ENCODE measurements at regions of chr5 and their contacts with region 1.

Region 1: GRCh38 chr5:35902046-35902676 is 36.3 kb downstream of the CAPSL start:
- DNase-seq: peak; percentile 42
- ATAC-seq: peak; percentile 60
- H3K4me3 Mint-ChIP-seq: peak overlapping the region; percentile 5
- H3K27ac Mint-ChIP-seq: peak overlapping the region; percentile 81
- H3K4me1 Mint-ChIP-seq: peaks cover 85% of the 10 kb centered on the region
- H3K27me3 Mint-ChIP-seq: no peaks in the 10 kb centered on the region

Region 2: DNA sequence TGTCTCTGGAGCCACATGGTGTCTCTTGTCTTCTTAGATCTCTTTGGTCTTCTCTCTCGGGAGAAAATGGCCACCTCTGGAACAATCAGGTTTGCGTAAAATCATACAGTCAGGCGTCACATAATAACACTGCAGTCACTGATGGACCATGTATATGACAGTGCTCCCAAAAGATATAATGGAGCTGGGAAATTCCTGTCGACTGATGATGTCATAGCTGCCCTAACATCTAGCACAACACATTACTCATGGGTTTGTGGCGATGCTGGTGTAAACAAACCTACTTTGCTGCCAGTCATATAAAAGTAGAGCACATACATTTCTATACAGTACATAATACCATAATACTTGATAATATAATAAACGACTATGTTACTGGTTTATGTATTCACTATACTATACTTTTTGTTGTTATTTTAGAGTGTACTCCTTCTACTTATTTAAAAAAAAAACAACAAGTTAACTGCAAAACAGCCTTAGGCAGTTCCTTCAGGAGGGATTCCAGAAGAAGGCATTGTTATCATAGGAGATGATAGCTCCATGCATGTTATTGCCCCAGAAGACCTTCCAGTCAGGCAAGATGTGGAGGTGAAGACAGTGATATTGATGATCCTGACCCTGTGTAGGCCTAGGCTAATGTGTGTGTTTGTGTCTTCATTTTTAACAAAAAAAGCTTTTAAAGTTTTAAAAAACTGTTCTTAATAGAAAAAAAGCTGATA is 1276.0 kb before region 1 on chr5:
- CTCF ChIA-PET with region 1: no interaction called
- POLR2A ChIA-PET with region 1: no interaction called
- intact Hi-C with region 1: no loop called
- DNase-seq: no peak
- ATAC-seq: peak; percentile 36
- H3K4me3 Mint-ChIP-seq: no peak overlapping the region
- H3K27ac Mint-ChIP-seq: no peak overlapping the region
- H3K4me1 Mint-ChIP-seq: peaks cover 9% of the 10 kb centered on the region
- H3K27me3 Mint-ChIP-seq: peaks cover 6% of the 10 kb centered on the region

Region 3: DNA sequence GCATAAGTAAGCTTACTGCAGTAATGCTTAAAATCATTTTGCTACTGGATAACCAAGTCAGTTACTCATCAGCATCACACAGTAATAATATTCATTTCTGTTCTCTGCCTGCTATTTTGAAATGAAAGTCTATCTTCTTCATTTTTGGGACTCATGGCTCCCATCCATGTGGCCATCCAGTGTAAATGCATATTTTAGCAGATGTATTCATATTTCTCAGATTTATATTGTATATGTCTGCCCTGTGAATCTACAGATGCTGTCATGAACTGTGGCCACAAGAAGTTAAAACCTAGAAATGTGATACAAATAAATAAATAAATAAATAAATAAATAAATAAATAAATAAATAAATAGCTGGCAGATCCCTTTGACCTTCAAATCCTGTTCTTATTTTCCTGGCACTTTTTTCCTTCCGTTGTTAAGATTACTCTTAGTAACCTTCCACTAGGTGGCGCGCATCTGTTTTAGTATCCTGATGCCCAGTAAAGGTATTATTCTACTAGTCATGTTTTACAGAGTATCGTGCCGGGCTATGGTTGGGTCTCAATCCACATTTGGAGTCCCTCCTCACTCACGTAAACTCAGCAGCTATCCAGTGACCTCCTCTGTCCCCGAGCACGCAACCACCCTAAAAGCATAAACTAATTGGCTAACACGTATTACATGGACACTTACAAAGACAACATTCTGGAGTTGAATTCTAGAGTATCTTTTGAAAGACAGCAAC is 124.6 kb before region 1 on chr5:
- CTCF ChIA-PET with region 1: interaction called, 11 read pairs
- POLR2A ChIA-PET with region 1: no interaction called
- intact Hi-C with region 1: no loop called
- DNase-seq: peak; percentile 86
- ATAC-seq: peak; percentile 33
- H3K4me3 Mint-ChIP-seq: peak overlapping the region; percentile 17
- H3K27ac Mint-ChIP-seq: peak overlapping the region; percentile 79
- H3K4me1 Mint-ChIP-seq: peaks cover 84% of the 10 kb centered on the region
- H3K27me3 Mint-ChIP-seq: no peaks in the 10 kb centered on the region

Region 4: GRCh38 chr5:35794684-35795375 is 107.3 kb before region 1 on chr5:
- CTCF ChIA-PET with region 1: interaction called, 3 read pairs
- POLR2A ChIA-PET with region 1: no interaction called
- intact Hi-C with region 1: loop called in 1 of 2 experiments (anchors 1 kb)
- DNase-seq: peak; percentile 45
- ATAC-seq: peak; percentile 40
- H3K4me3 Mint-ChIP-seq: peak overlapping the region; percentile 25
- H3K27ac Mint-ChIP-seq: peak overlapping the region; percentile 91
- H3K4me1 Mint-ChIP-seq: peaks cover 90% of the 10 kb centered on the region
- H3K27me3 Mint-ChIP-seq: no peaks in the 10 kb centered on the region

Region 5: DNA sequence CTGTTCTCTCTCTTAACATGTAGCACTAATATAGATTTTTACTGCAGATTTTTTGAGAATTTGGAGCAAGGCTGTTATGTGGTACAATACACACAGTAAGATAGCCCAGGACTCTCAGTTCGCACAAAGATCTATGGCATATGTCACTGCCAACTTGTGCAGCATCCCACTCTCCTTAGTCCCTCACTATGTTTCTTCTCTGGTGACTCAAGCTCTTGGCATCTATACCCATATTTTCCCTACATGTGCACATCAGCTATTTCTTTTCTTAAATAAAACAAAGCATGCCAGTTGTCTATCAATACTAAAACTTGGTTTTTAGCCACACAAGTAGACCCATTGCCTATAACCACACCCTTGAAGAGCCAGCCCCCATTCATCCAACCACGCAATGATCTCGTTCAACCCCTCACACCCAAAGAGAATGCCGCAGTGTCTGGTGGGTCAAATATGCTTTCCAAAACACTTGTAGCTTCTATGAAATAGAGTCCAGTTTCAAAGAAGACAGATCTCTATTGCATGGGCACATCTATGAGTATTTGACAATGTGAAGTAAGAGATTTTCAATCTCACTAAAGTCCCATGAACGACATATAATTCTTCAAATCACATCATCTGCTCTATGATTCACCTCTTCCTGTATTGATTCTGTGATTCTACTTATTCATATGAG is 63.7 kb before region 1 on chr5:
- CTCF ChIA-PET with region 1: no interaction called
- POLR2A ChIA-PET with region 1: no interaction called
- intact Hi-C with region 1: loop called in 1 of 2 experiments (anchors 1 kb)
- DNase-seq: peak; percentile 69
- ATAC-seq: peak; percentile 65
- H3K4me3 Mint-ChIP-seq: peak overlapping the region; percentile 61
- H3K27ac Mint-ChIP-seq: peak overlapping the region; percentile 99
- H3K4me1 Mint-ChIP-seq: peaks cover 78% of the 10 kb centered on the region
- H3K27me3 Mint-ChIP-seq: no peaks in the 10 kb centered on the region

Region 6: GRCh38 chr5:35919191-35919590 is 17.0 kb after region 1 on chr5:
- CTCF ChIA-PET with region 1: interaction called, 15 read pairs
- POLR2A ChIA-PET with region 1: no interaction called
- intact Hi-C with region 1: loop called (anchors 1 kb)
- DNase-seq: peak; percentile 46
- ATAC-seq: peak; percentile 72
- H3K4me3 Mint-ChIP-seq: peak overlapping the region; percentile 24
- H3K27ac Mint-ChIP-seq: peak overlapping the region; percentile 82
- H3K4me1 Mint-ChIP-seq: peaks cover 48% of the 10 kb centered on the region
- H3K27me3 Mint-ChIP-seq: no peaks in the 10 kb centered on the region

Region 7: DNA sequence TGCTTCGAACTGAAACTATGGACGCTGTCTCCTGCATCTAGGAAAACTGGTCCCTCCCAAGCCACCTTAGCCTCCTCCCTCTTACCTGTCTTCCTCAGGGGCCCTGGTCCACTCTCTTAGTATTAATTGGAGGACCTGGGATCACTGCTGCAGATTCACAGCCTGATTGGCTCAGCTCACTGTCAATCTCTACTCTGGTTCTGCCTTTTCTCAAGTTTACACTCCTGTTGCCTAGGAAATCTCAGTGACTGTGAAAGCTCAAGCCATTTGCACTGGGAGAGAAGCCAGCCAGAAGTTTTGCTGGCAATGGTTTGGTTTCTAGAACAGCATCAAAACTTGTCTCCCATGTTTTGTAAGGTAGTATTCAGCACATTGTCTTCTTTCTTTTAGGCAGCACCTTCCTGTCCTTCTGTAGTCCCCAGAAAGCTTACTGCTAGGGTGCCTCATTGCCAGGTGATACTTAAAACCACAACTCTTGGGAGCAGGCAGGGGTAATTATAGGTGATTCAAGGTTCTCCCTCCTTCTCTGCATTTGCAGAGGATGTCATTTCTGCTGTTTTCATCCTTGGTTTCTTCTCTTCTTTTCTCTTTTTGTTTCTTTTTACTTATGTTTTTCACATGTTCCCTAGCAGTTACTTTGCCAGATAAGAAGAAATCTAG is 36.5 kb after region 1 on chr5 and contains the start of gene CAPSL:
- CTCF ChIA-PET with region 1: no interaction called
- POLR2A ChIA-PET with region 1: no interaction called
- intact Hi-C with region 1: no loop called
- DNase-seq: peak; percentile 28
- ATAC-seq: peak; percentile 36
- H3K4me3 Mint-ChIP-seq: no peak within 1 kb of the TSS
- H3K27ac Mint-ChIP-seq: no peak within 1 kb of the TSS
- H3K4me1 Mint-ChIP-seq: peaks cover 5% of the 10 kb centered on the region
- H3K27me3 Mint-ChIP-seq: peaks cover 14% of the 10 kb centered on the region
- total RNA-seq, gene CAPSL: 1.0 to 1.7 TPM